Left ventricle myocardium inferior (tissue), 1 donor: ENCODE measurements at regions of chr19 and their contacts with region 1.

Region 1: GRCh38 chr19:7101498-7102253 is 32.2 kb downstream of the ZNF557 start:
- DNase-seq: no peak
- H3K4me3 ChIP-seq: no peak overlapping the region
- H3K27ac ChIP-seq: no peak overlapping the region
- H3K4me1 ChIP-seq: peaks cover 20% of the 10 kb centered on the region
- H3K27me3 ChIP-seq: no peaks in the 10 kb centered on the region
- CTCF ChIP-seq: no peak

Region 2: GRCh38 chr19:7304200-7304599 is 202.5 kb after region 1 on chr19:
- intact Hi-C with region 1: no loop called
- DNase-seq: no peak
- H3K4me3 ChIP-seq: no peak overlapping the region
- H3K27ac ChIP-seq: no peak overlapping the region
- H3K4me1 ChIP-seq: no peaks in the 10 kb centered on the region
- H3K27me3 ChIP-seq: no peaks in the 10 kb centered on the region
- CTCF ChIP-seq: no peak

Region 3: DNA sequence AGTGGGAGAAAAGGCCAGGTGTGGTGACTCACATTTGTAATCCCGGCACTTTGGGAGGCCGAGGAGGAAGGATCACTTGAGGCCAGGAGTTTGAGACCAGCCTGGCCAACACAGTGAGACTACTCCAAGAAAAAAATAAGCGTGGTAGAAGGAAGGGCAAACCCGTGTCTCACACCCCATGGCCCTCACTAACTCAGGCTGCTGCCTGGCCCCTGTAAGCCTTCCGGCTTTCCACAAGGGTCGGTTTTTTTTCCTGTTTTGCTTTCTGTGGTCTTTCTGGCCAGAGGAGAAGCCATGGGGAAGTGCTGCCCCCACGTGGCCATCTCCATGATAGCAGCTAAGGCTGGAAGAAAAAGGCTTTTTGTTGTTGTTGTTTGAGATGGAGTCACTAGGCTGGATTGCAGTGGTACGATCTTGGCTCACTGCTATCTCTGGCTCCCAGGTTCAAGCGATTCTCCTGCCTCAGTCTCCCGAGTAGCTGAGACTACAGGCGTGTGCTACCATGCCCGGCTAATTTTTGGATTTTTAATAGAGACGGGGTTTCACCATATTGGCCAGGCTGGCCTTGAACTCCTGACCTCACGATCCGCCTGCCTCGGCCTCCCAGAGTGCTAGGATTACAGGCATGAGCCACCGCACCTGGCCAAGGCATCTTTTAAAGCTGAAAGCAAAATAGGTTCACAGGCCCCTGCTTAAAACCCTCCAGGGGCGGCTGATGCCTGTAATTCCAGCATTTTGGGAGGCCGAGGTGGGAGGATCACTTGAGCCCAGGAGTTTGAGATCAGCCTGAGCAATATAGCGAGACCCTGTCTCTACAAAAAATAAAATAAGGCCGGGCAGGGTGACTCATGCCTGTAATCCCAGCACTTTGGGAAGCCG is 239.5 kb after region 1 on chr19:
- intact Hi-C with region 1: loop called (anchors 2 kb)
- DNase-seq: peak; percentile 82
- H3K4me3 ChIP-seq: no peak overlapping the region
- H3K27ac ChIP-seq: no peak overlapping the region
- H3K4me1 ChIP-seq: peaks cover 14% of the 10 kb centered on the region
- H3K27me3 ChIP-seq: peaks cover 9% of the 10 kb centered on the region
- CTCF ChIP-seq: peak; percentile 96